OCI-LY7 (cell line): ENCODE measurements at regions of chr2 and their contacts with region 1.

Region 1: DNA sequence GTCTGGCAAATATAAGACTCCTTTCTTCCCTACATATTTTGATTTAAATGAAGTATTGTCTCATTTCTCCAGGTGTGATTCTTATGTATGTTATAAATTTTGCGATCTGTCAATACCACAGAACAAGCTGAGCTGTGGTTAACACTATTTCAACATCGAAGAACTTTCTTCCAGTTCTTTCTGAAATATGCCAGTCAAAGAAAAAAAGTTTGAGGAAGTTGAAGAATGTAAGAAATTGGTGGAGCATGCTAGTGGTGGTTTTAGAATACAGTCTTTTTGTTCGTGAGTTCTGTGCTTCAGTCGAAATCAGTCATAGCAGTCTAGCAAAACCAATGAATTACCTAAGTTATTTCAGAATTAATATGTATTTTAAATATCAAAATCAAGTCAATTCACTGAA is 8.6 kb upstream of the COBLL1 start:
- DNase-seq: no peak
- H3K4me3 ChIP-seq: no peak overlapping the region
- H3K27ac ChIP-seq: no peak overlapping the region
- H3K4me1 ChIP-seq: no peaks in the 10 kb centered on the region
- CTCF ChIP-seq: no peak

Region 2: DNA sequence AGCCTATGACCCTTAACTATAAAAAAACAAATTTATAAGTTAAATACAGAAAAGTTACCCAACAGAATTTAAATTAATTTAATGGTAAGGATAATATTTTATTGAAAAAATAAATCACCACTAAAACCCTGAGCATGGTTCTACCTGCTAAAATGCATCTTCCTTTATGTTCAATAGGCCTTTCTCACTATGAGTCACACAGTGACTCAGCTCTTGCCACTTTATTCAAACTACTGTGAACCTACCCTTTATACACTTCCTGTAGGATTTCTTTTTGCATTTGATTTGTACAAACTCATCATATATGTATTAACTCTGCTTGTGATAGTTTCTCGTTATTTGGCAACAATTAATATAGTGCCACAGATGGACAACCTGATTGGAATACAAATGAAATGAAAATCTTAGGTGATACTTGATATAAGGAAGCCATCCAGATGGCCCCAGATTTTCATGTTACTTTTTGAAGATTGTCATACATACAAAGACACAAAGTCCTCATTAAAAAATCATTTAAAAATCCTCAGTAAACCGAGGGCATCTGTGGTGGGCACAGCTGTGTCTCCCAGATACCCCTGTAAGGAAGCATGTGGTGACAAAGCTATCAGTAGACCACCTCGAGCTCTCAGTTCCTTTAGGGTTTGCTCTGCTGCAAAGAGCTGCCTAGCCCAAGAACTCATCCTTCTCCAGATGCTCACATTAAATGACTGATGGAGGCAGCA is 46.6 kb after region 1 on chr2:
- CTCF ChIA-PET with region 1: no interaction called
- POLR2A ChIA-PET with region 1: interaction called, 10 read pairs
- intact Hi-C with region 1: no loop called
- DNase-seq: no peak
- H3K4me3 ChIP-seq: no peak overlapping the region
- H3K27ac ChIP-seq: no peak overlapping the region
- H3K4me1 ChIP-seq: no peaks in the 10 kb centered on the region
- CTCF ChIP-seq: no peak